Heart left ventricle (tissue), 16 donors: ENCODE measurements at regions of chr1 and their contacts with region 1.

Region 1: GRCh38 chr1:215566556-215567490 is at the start of gene KCTD3:
- DNase-seq: peak; percentile 82 to 91 (median 88)
- ATAC-seq: peak; percentile 70 to 97 (median 94)
- H3K4me3 ChIP-seq: peak within 1 kb of the TSS; percentile 63 to 96 (median 84)
- H3K27ac ChIP-seq: peak within 1 kb of the TSS; percentile 85 to 94 (median 90)
- H3K4me1 ChIP-seq: peaks cover 0 to 35% (median 29%) of the 10 kb centered on the region in 12 donors
- H3K27me3 ChIP-seq: no peaks in the 10 kb centered on the region
- CTCF ChIP-seq: no peak
- POLR2A ChIP-seq: peak in 1 of 2 donors; percentile 59
- total RNA-seq, gene KCTD3: 13.2 to 22.5 (median 18.8) TPM

Region 2: DNA sequence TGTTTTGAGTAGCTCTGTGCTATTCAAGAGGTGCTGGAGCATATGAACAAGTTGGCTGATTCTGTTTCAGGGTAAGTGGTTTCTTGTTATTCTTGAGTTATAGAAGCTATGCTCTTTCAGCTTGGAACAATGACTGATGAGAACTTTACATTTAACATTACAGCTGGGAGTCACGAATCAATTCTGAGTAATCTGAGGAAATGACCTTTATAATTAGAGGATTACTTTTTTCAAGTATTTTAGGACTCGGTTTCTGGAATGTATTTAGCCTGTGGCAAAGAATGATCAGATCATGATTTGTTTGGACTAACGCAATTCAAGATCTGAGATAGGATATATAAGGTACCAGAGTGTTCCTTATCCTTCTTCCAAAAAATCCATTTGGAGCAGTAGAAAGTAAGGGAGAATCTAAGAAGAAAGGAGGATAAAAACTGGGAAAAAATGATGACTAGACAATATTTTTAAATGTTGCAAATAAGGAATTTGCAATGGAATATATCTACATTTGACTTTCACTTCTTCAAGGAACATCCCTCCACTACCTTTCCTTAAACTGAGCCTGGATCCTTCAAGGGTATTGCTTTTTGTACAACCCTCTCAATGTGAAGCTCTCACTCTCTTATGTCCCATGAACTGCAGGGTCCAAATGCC is 76.8 kb before region 1 on chr1:
- intact Hi-C with region 1: no loop called
- DNase-seq: no peak
- ATAC-seq: no peak
- H3K4me3 ChIP-seq: no peak overlapping the region
- H3K27ac ChIP-seq: no peak overlapping the region
- H3K4me1 ChIP-seq: no peaks in the 10 kb centered on the region
- H3K27me3 ChIP-seq: no peaks in the 10 kb centered on the region
- CTCF ChIP-seq: no peak
- POLR2A ChIP-seq: no peak

Region 3: GRCh38 chr1:215539803-215540592 is 26.8 kb before region 1 on chr1:
- intact Hi-C with region 1: loop called in 1 of 10 experiments (anchors 2 kb)
- DNase-seq: no peak
- ATAC-seq: peak in 1 of 4 donors; percentile 29
- H3K4me3 ChIP-seq: no peak overlapping the region
- H3K27ac ChIP-seq: no peak overlapping the region
- H3K4me1 ChIP-seq: peaks cover 0 to 4% (median 0%) of the 10 kb centered on the region in 12 donors
- H3K27me3 ChIP-seq: no peaks in the 10 kb centered on the region
- CTCF ChIP-seq: no peak
- POLR2A ChIP-seq: no peak

Region 4: DNA sequence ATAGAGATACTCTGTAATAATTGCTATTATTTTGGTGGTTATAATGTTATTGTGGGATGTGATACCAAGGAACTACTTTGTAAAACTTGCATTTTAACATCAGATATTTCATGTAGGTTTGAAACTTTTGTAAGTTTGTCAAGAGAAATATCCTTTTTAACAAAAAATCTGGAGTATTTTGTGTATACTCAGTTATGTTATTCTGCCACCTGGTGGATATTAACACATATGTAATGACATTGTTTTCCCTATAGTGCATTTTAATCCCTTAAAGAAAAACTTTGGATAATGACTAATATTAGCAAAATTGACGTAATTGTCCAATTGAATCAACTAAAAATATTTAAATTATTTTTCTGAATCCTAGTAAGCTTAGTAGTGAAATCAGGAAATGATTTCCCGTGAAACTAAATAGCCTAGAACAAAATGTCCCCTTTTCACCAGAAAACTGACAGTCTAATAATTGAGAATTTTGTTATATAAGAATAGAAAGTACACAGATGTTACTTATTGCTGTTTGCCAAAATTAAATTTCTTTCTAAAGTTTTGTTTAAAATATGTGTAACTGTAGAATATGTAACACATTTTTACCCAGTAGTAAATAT is 39.8 kb after region 1 on chr1:
- intact Hi-C with region 1: loop called in 1 of 10 experiments (anchors 5 kb)
- DNase-seq: no peak
- ATAC-seq: no peak
- H3K4me3 ChIP-seq: no peak overlapping the region
- H3K27ac ChIP-seq: no peak overlapping the region
- H3K4me1 ChIP-seq: peaks cover 0 to 14% (median 0%) of the 10 kb centered on the region in 12 donors
- H3K27me3 ChIP-seq: no peaks in the 10 kb centered on the region
- CTCF ChIP-seq: peak; percentile 30 to 63 (median 46)
- POLR2A ChIP-seq: no peak